Activated CD4-positive, alpha-beta T cell treated with anti-CD3 and anti-CD28 coated beads, Interleukin-2, amount 10 ng/mL, durations not matched to agents 24 days and 14 days (primary cell): ENCODE measurements at regions of chr5 and their contacts with region 1.

Region 1: DNA sequence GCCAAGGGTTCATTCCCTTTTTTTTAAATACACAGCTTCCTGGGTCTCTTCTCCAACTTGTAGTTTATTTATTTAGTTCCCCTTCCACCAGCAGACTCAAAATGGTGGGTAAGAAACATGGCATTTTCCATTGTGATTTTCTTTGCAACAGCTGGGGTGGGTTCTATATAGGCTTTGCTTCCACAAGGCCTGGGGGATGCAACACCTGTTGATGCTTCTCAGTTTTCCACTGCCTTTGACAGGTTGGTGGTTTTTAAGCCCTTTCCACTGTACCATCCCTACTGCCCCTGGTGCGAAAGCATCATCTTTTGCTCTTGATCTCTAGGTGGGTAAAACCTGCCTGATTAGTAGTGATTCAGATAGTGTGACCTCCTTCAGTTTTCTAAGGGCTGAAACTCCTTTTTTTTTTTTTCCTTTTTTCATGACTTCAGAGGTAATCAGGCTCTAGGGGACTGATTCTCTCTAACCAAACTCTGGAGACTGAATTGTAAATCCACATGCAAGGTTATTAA is 8.5 kb downstream of the KDM3B start:
- DNase-seq: no peak
- H3K4me3 Mint-ChIP-seq: no peak overlapping the region
- H3K27ac Mint-ChIP-seq: peak overlapping the region; percentile 53
- H3K4me1 Mint-ChIP-seq: peaks cover 7% of the 10 kb centered on the region
- H3K27me3 Mint-ChIP-seq: no peaks in the 10 kb centered on the region

Region 2: GRCh38 chr5:137400571-137400970 is 960.4 kb before region 1 on chr5:
- intact Hi-C with region 1: no loop called
- DNase-seq: no peak
- H3K4me3 Mint-ChIP-seq: no peak overlapping the region
- H3K27ac Mint-ChIP-seq: no peak overlapping the region
- H3K4me1 Mint-ChIP-seq: no peaks in the 10 kb centered on the region
- H3K27me3 Mint-ChIP-seq: no peaks in the 10 kb centered on the region

Region 3: GRCh38 chr5:138178516-138179276 is 182.3 kb before region 1 on chr5 and contains the starts of genes BRD8 and KIF20A:
- intact Hi-C with region 1: no loop called
- DNase-seq: peak; percentile 97
- H3K4me3 Mint-ChIP-seq: no peak within 1 kb of the TSS
- H3K27ac Mint-ChIP-seq: no peak within 1 kb of the TSS
- H3K4me1 Mint-ChIP-seq: peaks cover 20% of the 10 kb centered on the region
- H3K27me3 Mint-ChIP-seq: no peaks in the 10 kb centered on the region
- total RNA-seq, gene BRD8: 53.6 and 61.1 TPM in 2 replicates
- total RNA-seq, gene KIF20A: 18.0 and 19.7 TPM in 2 replicates

Region 4: GRCh38 chr5:139038613-139039305 is 677.8 kb after region 1 on chr5:
- intact Hi-C with region 1: loop called (anchors 5 kb)
- DNase-seq: no peak
- H3K4me3 Mint-ChIP-seq: no peak overlapping the region
- H3K27ac Mint-ChIP-seq: no peak overlapping the region
- H3K4me1 Mint-ChIP-seq: no peaks in the 10 kb centered on the region
- H3K27me3 Mint-ChIP-seq: no peaks in the 10 kb centered on the region